PC-3 (cell line): ENCODE measurements at regions of chr19 and their contacts with region 1.

Region 1: GRCh38 chr19:42450314-42450934 is 7.7 kb upstream of the CXCL17 start:
- DNase-seq: peak; percentile 87
- ATAC-seq: peak; percentile 67
- H3K4me3 ChIP-seq: no peak overlapping the region
- H3K27ac ChIP-seq: peak overlapping the region; percentile 75
- H3K4me1 ChIP-seq: peaks cover 31% of the 10 kb centered on the region
- H3K27me3 ChIP-seq: no peaks in the 10 kb centered on the region
- CTCF ChIP-seq: peak; percentile 80

Region 2: GRCh38 chr19:42333975-42334696 is 116.3 kb before region 1 on chr19:
- CTCF ChIA-PET with region 1: no interaction called
- POLR2A ChIA-PET with region 1: no interaction called
- intact Hi-C with region 1: no loop called
- DNase-seq: no peak
- ATAC-seq: no peak
- H3K4me3 ChIP-seq: no peak overlapping the region
- H3K27ac ChIP-seq: no peak overlapping the region
- H3K4me1 ChIP-seq: no peaks in the 10 kb centered on the region
- H3K27me3 ChIP-seq: no peaks in the 10 kb centered on the region
- CTCF ChIP-seq: no peak

Region 3: DNA sequence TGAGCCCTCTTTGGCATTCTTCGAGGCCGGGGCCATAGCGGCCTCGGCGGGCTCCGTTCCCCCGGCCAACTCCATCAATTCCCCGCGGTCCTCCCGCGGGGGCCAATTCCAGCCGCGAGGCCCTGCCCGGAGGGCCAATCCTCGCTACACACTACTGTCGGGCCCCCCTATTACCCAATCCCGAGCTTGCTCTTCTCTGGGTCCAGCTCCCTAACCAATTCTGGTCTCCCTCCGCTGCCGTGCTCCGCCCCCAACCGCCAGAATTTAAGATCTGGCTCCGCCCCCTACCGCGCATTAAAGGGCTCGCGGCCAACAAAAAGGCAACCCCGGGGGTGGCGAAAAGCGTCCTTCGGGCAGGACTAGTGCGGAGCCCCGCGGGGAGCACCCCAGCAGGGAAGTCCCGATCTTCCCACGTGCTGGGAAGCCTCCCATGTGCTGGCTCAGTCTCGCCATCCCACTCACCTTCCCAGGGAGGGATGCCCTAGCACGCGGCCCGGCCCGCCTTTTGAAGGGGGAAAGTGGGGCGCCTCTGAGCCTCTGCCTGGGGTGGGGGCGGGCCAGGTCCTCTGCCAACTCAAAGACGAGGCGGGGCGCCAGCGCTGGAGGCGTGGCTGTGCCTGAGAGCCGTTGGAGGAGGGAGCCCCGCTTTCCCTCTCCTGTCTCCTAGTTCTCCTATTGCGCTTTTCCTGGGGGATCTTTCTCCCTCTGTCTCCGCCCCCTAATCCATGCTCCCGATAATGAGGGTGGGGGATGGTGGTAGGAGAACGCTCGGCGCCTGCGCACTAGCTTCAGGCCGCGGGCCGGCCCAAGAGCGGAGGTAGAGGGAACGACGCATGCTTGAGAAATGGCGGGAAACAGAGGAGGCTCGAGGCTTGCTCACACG is 26.7 kb before region 1 on chr19:
- CTCF ChIA-PET with region 1: no interaction called
- POLR2A ChIA-PET with region 1: no interaction called
- intact Hi-C with region 1: no loop called
- DNase-seq: peak; percentile 81
- ATAC-seq: peak; percentile 92
- H3K4me3 ChIP-seq: peak overlapping the region; percentile 72
- H3K27ac ChIP-seq: no peak overlapping the region
- H3K4me1 ChIP-seq: peaks cover 28% of the 10 kb centered on the region
- H3K27me3 ChIP-seq: no peaks in the 10 kb centered on the region
- CTCF ChIP-seq: no peak

Region 4: GRCh38 chr19:42471554-42472249 is 21.3 kb after region 1 on chr19:
- CTCF ChIA-PET with region 1: no interaction called
- POLR2A ChIA-PET with region 1: no interaction called
- intact Hi-C with region 1: no loop called
- DNase-seq: peak; percentile 85
- ATAC-seq: peak; percentile 89
- H3K4me3 ChIP-seq: no peak overlapping the region; the same call in 1 of the 2 replicates
- H3K27ac ChIP-seq: peak overlapping the region; percentile 63
- H3K4me1 ChIP-seq: peaks cover 31% of the 10 kb centered on the region
- H3K27me3 ChIP-seq: no peaks in the 10 kb centered on the region
- CTCF ChIP-seq: no peak

Region 5: DNA sequence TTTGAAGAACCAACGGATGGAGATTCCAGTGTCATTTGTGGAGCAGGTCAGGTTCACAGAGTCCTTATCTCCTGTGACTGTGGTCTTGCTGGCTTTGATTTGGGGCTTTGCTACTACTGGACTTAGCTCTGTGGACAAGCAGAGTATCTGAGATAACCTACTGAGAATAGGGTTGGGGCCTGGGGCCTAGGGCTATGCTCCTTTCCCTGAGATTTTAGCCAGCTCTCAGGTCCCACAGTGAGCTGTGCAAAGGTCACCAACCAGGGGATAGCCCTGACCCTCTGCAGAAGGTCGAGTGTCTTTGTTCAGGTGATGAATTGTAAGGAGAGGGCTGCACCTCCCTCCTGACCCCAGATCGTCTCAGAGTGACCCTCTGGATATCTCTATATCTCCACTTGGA is 68.7 kb after region 1 on chr19:
- CTCF ChIA-PET with region 1: no interaction called
- POLR2A ChIA-PET with region 1: no interaction called
- intact Hi-C with region 1: no loop called
- DNase-seq: no peak
- ATAC-seq: no peak
- H3K4me3 ChIP-seq: no peak overlapping the region
- H3K27ac ChIP-seq: no peak overlapping the region
- H3K4me1 ChIP-seq: no peaks in the 10 kb centered on the region
- H3K27me3 ChIP-seq: no peaks in the 10 kb centered on the region
- CTCF ChIP-seq: no peak

Region 6: GRCh38 chr19:42529248-42529764 is 78.9 kb after region 1 on chr19:
- CTCF ChIA-PET with region 1: interaction called, 3 read pairs
- POLR2A ChIA-PET with region 1: no interaction called
- intact Hi-C with region 1: loop called (anchors 1 kb)
- DNase-seq: peak; percentile 71
- ATAC-seq: peak; percentile 71
- H3K4me3 ChIP-seq: no peak overlapping the region
- H3K27ac ChIP-seq: no peak overlapping the region
- H3K4me1 ChIP-seq: peaks cover 18% of the 10 kb centered on the region
- H3K27me3 ChIP-seq: no peaks in the 10 kb centered on the region
- CTCF ChIP-seq: peak; percentile 84